Left ventricle myocardium superior (tissue), 1 donor: ENCODE measurements at regions of chr3 and their contacts with region 1.

Region 1: DNA sequence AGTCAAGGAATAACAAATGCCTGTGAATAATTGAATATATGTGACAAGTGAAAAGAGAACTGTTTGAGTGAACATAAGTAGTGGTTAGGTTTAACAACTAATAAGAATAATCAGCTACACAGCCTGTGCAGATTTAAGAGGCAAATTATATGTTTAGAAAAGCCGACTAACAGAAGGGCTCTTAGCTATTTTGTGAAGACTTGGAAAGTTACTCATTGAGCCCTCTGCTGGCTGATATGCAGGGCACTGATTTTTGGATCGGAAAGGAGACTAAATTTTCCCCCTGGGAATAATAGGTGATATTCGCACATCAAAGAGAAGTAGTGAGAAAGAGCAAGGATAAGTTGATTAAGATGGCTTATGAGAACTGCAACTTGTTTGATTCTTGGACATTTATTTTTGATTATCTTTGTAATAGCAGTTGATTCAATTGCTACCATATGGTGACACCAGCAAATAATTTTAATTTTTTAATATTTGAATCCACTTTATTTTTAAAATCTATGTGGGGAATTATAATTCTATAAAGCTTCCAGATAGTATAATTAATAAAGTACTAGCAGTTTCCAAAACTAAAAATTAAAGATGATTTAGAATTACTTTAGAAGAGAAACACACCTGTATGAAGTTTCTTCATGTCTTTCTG is 156.2 kb downstream of the NLGN1 start:
- DNase-seq: no peak
- ATAC-seq: peak; percentile 39

Region 2: GRCh38 chr3:173371848-173372487 is 181.8 kb before region 1 on chr3:
- intact Hi-C with region 1: loop called (anchors 10 kb)
- DNase-seq: no peak
- ATAC-seq: peak; percentile 42

Region 3: GRCh38 chr3:173411375-173411973 is 142.3 kb before region 1 on chr3:
- intact Hi-C with region 1: loop called (anchors 5 kb)
- DNase-seq: no peak
- ATAC-seq: peak; percentile 83